ENCODE measurements at regions of chr12 and their contacts with region 1.

Region 1: GRCh38 chr12:3135522-3136461 is 58.6 kb downstream of the TSPAN9 start:
- DNase-seq: peak; percentile 53
- H3K4me3 Mint-ChIP-seq: no peak overlapping the region
- H3K27ac Mint-ChIP-seq: no peak overlapping the region
- H3K4me1 Mint-ChIP-seq: no peaks in the 10 kb centered on the region
- H3K27me3 Mint-ChIP-seq: peaks cover 10% of the 10 kb centered on the region
- CTCF ChIP-seq: peak; percentile 75

Region 2: DNA sequence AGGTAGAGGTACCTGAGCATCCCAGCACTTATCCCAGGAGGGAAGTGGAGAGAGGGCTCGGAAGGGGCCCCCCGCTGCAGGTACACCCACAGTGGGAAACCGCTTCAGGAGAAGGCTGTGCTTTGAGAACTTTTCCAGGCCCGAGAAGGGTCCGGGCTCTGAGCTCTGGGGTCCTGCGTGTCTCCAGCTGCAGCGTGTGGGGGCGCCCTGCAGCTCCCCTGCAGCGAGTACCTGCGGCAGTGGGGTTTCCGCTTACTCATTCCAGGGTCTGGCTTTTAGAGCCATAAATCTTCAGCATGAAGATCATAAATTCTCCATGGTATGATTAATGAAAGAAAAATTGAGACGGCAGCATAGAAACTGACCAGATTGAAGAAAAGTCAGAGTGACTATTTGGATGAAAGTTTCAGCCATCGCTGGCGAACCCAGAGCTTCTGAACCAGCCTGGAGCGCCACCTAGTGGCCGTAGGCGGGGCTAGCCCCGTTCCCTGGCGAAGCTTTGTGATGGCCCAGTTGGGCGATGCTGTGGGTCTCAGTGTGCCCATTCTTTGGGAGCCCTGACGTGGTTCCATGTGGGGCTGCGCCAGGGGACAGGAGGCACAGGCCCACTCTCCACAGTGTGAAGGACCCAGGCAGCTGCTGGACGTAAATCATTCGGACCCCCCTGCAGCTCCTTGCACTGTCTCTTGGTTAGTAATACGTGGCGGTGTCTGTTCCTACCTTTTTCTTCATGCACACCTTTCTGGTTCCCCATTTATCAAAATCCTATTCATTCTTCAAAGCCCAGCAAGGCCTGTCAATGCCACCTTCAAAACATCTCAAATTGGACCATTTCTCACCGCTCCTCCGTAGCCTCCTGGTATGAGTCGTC is 139.6 kb after region 1 on chr12:
- CTCF ChIA-PET with region 1: interaction called, 61 read pairs
- intact Hi-C with region 1: loop called (anchors 1 kb)
- DNase-seq: peak; percentile 85
- H3K4me3 Mint-ChIP-seq: no peak overlapping the region
- H3K27ac Mint-ChIP-seq: no peak overlapping the region
- H3K4me1 Mint-ChIP-seq: peaks cover 16% of the 10 kb centered on the region
- H3K27me3 Mint-ChIP-seq: peaks cover 47% of the 10 kb centered on the region
- CTCF ChIP-seq: peak; percentile 84

Region 3: DNA sequence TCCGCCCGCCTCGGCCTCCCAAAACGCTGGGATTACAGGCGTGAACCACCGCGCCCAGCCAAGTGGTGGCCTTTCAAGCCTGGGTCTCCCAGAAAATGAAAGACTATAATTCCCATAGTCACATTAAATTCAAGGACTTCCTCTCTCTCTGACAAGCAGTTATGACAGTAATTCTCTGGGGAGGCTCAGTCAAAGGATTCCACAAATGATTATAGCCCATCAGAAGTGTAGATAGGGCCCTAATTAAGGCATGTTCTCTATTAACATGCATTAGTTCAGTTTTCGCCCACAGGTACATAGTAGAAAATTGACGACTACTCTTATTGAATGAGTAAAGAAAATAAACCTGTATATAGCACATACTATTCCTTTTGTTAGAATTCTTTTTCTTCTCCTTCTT is 371.6 kb after region 1 on chr12:
- CTCF ChIA-PET with region 1: no interaction called
- intact Hi-C with region 1: no loop called
- DNase-seq: no peak
- H3K4me3 Mint-ChIP-seq: no peak overlapping the region
- H3K27ac Mint-ChIP-seq: no peak overlapping the region
- H3K4me1 Mint-ChIP-seq: no peaks in the 10 kb centered on the region
- H3K27me3 Mint-ChIP-seq: peaks cover 71% of the 10 kb centered on the region
- CTCF ChIP-seq: no peak